ENCODE measurements at regions of chr6 and their contacts with region 1.

Region 1: GRCh38 chr6:32700391-32701040 is 34.1 kb upstream of the HLA-DQB1 start:
- DNase-seq: no peak
- H3K4me3 ChIP-seq: no peak overlapping the region
- H3K27ac ChIP-seq: no peak overlapping the region
- H3K4me1 ChIP-seq: no peaks in the 10 kb centered on the region
- H3K27me3 ChIP-seq: peaks cover 0 to 54% (median 0%) of the 10 kb centered on the region in 4 donors
- CTCF ChIP-seq: peak; percentile 14 to 73 (median 66)
- POLR2A ChIP-seq: no peak

Region 2: GRCh38 chr6:32785781-32786533 is 85.4 kb after region 1 on chr6:
- intact Hi-C with region 1: loop called (anchors 10 kb)
- DNase-seq: no peak
- H3K4me3 ChIP-seq: no peak overlapping the region
- H3K27ac ChIP-seq: no peak overlapping the region
- H3K4me1 ChIP-seq: no peaks in the 10 kb centered on the region
- H3K27me3 ChIP-seq: peaks cover 0 to 39% (median 0%) of the 10 kb centered on the region in 4 donors
- CTCF ChIP-seq: peak in 5 of 6 experiments; percentile 50 to 72 (median 61)
- POLR2A ChIP-seq: no peak